ENCODE measurements at regions of chr1 and their contacts with region 1.

Region 1: GRCh38 chr1:59947047-59947938 is 20.7 kb upstream of the CYP2J2 start:
- DNase-seq: peak; percentile 93

Region 2: GRCh38 chr1:59879574-59879973 is 67.7 kb before region 1 on chr1:
- CTCF ChIA-PET with region 1: interaction called, 86 read pairs
- POLR2A ChIA-PET with region 1: interaction called, 3 read pairs
- DNase-seq: peak; percentile 84

Region 3: GRCh38 chr1:59903141-59903754 is 44.0 kb before region 1 on chr1:
- CTCF ChIA-PET with region 1: interaction called, 10 read pairs
- POLR2A ChIA-PET with region 1: no interaction called
- DNase-seq: peak; percentile 75

Region 4: DNA sequence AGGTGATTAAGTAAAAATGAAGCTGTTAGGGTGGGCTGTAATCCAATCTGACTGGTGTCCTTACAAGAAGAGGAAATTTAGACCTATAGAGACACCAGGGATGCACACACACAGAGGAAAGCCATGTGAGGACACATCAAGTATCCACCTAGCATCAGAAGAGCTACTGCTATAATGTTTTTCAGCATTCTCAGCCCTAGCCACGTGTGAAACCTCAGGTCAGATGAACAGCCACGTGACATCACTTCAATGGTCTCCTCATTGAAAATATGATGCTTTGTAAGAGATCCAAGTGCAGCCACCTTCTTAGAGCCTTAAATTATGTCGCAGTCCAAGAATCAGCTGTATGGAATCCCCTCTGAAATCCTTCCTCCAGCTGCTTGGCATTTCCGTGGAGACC is 61.2 kb after region 1 on chr1:
- CTCF ChIA-PET with region 1: no interaction called
- POLR2A ChIA-PET with region 1: no interaction called
- DNase-seq: no peak

Measured in HEK293T (cell line).